ENCODE measurements at regions of chr1 and their contacts with region 1.

Region 1: DNA sequence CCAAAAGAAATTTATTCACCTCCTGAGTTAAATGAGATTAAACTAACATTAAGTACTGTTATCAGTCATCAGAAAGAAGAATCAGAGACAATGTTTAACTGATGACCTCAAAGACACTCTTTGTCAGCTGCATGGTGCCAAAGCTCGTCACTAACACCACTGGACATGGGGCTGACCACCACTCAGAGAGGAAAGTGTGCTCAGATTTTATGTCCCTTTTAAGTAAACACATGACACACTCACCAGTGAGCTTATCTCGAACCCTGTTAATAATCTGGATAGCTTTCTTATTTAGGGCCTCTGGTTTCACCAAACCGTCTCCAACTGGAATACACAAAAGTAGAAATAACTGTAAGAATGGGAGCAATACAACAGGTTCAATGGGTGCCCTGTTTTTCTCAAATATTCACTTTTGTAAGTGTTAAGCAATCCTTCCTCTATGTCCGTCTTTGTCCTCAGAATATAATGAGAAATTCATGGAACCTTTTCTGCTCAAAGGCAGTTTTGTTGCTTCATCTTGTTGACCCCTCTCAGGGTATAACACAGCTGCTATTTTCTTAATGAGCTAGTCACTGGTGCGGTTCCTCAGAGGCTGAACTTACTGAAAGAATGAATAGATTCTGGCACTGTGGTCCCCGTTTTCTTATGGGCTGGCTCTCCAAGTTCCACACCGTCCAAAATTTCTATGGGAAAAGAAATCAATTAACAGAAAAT is 9.5 kb upstream of the EXOSC10 start:
- DNase-seq: no peak
- ATAC-seq: no peak
- H3K4me3 Mint-ChIP-seq: no peak overlapping the region
- H3K27ac Mint-ChIP-seq: no peak overlapping the region
- H3K4me1 Mint-ChIP-seq: no peaks in the 10 kb centered on the region
- H3K27me3 Mint-ChIP-seq: no peaks in the 10 kb centered on the region

Region 2: DNA sequence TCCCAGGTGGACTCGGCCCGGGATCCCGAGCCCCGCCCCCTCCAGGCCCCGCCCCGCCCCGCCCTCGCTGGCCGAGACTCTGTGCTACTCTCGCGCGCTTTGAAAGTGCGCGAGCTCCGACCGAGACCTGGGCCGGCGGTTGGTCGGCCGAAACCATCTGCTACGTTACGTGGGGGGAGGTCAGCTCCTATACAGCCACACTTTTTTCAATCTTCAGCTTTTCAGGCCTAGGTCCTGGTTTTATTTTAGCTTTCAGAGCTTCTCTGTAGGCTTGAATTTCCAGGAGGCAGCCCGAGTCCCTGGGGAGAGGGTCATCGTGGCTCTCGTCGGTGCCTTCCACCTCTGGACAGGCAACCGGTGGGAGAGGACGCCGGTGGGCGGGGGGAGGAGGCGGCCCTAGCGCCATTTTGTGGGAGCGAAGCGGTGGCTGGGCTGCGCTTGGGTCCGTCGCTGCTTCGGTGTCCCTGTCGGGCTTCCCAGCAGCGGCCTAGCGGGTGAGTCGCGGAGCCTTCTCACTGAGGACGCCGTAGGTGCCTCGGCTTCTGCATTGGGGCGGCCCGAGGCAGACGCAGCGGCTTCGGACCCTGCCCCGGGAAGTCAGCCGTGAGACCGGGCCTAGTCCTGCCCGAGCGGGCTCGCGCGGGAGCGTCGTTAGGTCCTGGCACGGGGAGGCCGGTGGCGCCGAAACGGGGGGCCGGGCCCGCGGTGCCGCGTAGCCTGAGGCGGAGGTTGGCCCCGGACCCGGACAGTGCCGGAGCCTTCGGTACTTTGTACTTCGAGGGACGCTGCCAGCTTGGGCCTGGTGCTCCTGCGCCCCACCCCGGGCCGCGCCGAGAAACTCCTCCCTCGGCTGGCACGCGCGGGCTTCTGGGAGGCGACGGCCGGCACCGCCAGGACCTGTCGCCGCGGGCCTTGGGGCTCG is 96.7 kb before region 1 on chr1 and contains the start of gene TARDBP:
- POLR2A ChIA-PET with region 1: no interaction called
- DNase-seq: peak; percentile 93
- ATAC-seq: peak; percentile 82
- H3K4me3 Mint-ChIP-seq: peak within 1 kb of the TSS; percentile 91
- H3K27ac Mint-ChIP-seq: peak within 1 kb of the TSS; percentile 99
- H3K4me1 Mint-ChIP-seq: peaks cover 17% of the 10 kb centered on the region
- H3K27me3 Mint-ChIP-seq: no peaks in the 10 kb centered on the region
- total RNA-seq, gene TARDBP: 166 to 174 TPM

Region 3: GRCh38 chr1:11037740-11038182 is 71.4 kb before region 1 on chr1:
- POLR2A ChIA-PET with region 1: no interaction called
- DNase-seq: peak; percentile 86
- ATAC-seq: peak; percentile 97
- H3K4me3 Mint-ChIP-seq: peak overlapping the region; percentile 31
- H3K27ac Mint-ChIP-seq: no peak overlapping the region
- H3K4me1 Mint-ChIP-seq: peaks cover 8% of the 10 kb centered on the region
- H3K27me3 Mint-ChIP-seq: no peaks in the 10 kb centered on the region

Region 4: DNA sequence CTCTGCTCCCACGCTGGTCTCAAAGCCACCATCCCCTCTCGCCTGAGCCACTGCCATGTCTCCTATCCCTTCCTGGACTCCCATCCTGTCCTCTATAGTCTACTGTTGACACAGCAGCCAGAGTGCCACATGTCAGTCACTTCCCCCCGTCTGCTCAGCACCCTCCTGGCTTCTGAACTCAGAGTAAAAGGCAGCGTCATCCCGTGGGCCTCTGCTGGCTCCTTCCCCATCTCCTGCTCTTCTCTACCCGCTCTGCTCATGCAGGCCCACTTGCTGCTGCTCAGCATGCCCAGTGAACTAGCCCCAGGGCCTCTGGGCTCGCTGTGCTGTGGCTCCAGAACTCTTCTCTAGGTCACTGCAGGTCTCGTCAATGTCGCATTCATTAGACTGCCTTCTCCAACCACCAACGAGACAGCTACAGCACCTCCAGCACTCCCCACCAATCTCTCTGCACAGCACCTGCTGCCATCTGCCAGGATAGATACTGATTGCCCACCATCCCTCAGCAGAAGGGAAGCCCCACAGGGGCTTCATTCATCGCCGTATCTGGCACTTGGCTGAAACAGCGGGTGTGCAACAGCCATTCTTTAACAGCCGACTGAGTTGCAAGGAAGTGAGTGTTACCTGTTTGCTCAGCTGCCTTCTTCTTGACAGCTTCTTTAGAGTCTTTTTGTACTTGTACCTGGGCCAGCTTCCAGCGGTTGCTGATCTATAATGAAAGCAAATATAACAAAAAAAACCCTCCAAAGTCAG is 37.6 kb before region 1 on chr1:
- POLR2A ChIA-PET with region 1: interaction called, 11 read pairs
- DNase-seq: no peak
- ATAC-seq: no peak
- H3K4me3 Mint-ChIP-seq: no peak overlapping the region
- H3K27ac Mint-ChIP-seq: peak overlapping the region; percentile 62
- H3K4me1 Mint-ChIP-seq: peaks cover 19% of the 10 kb centered on the region
- H3K27me3 Mint-ChIP-seq: no peaks in the 10 kb centered on the region

Region 5: GRCh38 chr1:11285883-11286734 is 176.9 kb after region 1 on chr1:
- POLR2A ChIA-PET with region 1: no interaction called
- DNase-seq: no peak
- ATAC-seq: no peak
- H3K4me3 Mint-ChIP-seq: no peak overlapping the region
- H3K27ac Mint-ChIP-seq: peak overlapping the region; percentile 79
- H3K4me1 Mint-ChIP-seq: peaks cover 45% of the 10 kb centered on the region
- H3K27me3 Mint-ChIP-seq: no peaks in the 10 kb centered on the region